ENCODE measurements at regions of chr13 and their contacts with region 1.

Region 1: GRCh38 chr13:77779552-77780272 is 82.2 kb downstream of the SLAIN1 start:
- DNase-seq: peak; percentile 86
- H3K4me3 ChIP-seq: no peak overlapping the region
- H3K27ac ChIP-seq: peak overlapping the region; percentile 46
- H3K4me1 ChIP-seq: peaks cover 8% of the 10 kb centered on the region
- H3K27me3 ChIP-seq: no peaks in the 10 kb centered on the region
- CTCF ChIP-seq: peak; percentile 38 to 45
- POLR2A ChIP-seq: no peak

Region 2: DNA sequence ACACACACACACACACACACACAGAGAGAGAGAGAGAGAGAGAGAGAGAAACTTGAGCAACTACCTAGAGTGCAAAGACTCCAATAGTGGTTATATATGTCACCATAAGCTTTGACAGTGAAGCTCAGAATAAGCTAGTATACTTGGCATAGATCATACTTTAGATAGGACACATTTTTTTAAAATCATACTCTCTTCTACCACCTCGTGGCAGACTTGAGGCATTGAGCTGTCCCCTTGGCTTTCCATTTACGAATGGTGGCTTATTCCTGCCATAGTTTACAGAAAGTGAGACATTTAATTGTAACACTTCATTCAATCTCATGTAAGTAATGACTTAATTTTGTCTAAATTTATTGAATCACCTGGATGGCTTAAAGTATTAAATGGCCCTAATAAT is 30.7 kb after region 1 on chr13:
- CTCF ChIA-PET with region 1: interaction called, 9 read pairs
- POLR2A ChIA-PET with region 1: no interaction called
- dilution Hi-C with region 1: no loop called
- intact Hi-C with region 1: loop called (anchors 2 kb)
- DNase-seq: peak; percentile 45
- H3K4me3 ChIP-seq: no peak overlapping the region
- H3K27ac ChIP-seq: no peak overlapping the region
- H3K4me1 ChIP-seq: no peaks in the 10 kb centered on the region
- H3K27me3 ChIP-seq: peaks cover 5 to 8% of the 10 kb centered on the region in 2 experiments
- CTCF ChIP-seq: peak; percentile 26 to 43
- POLR2A ChIP-seq: no peak

Region 3: GRCh38 chr13:77860507-77860981 is 80.8 kb after region 1 on chr13:
- CTCF ChIA-PET with region 1: no interaction called
- POLR2A ChIA-PET with region 1: no interaction called
- dilution Hi-C with region 1: no loop called
- intact Hi-C with region 1: no loop called
- DNase-seq: peak; percentile 64
- H3K4me3 ChIP-seq: no peak overlapping the region
- H3K27ac ChIP-seq: no peak overlapping the region
- H3K4me1 ChIP-seq: peaks cover 4% of the 10 kb centered on the region
- H3K27me3 ChIP-seq: no peaks in the 10 kb centered on the region
- CTCF ChIP-seq: no peak
- POLR2A ChIP-seq: no peak

Region 4: GRCh38 chr13:78022164-78022877 is 242.6 kb after region 1 on chr13:
- CTCF ChIA-PET with region 1: no interaction called
- POLR2A ChIA-PET with region 1: no interaction called
- dilution Hi-C with region 1: no loop called
- intact Hi-C with region 1: loop called (anchors 5 kb)
- DNase-seq: peak; percentile 95
- H3K4me3 ChIP-seq: no peak overlapping the region
- H3K27ac ChIP-seq: peak overlapping the region; percentile 72
- H3K4me1 ChIP-seq: peaks cover 25% of the 10 kb centered on the region
- H3K27me3 ChIP-seq: no peaks in the 10 kb centered on the region
- CTCF ChIP-seq: no peak
- POLR2A ChIP-seq: no peak